Natural killer cell (primary cell): ENCODE measurements at regions of chr11 and their contacts with region 1.

Region 1: GRCh38 chr11:85854557-85855340 is 434 bp upstream of the CCDC83 start:
- DNase-seq: peak; percentile 91 to 92
- ATAC-seq: peak; percentile 92 to 99 (median 93)
- H3K4me3 ChIP-seq: peak overlapping the region; percentile 39
- H3K4me3 Mint-ChIP-seq: peak overlapping the region; percentile 94
- H3K27ac ChIP-seq: peak overlapping the region; percentile 71
- H3K27ac Mint-ChIP-seq: peak overlapping the region; percentile 94 to 96
- H3K4me1 ChIP-seq: peaks cover 11% of the 10 kb centered on the region
- H3K4me1 Mint-ChIP-seq: peaks cover 16% of the 10 kb centered on the region in 2 donors
- H3K27me3 ChIP-seq: no peaks in the 10 kb centered on the region
- H3K27me3 Mint-ChIP-seq: peaks cover 0 to 14% of the 10 kb centered on the region in 2 donors
- CTCF ChIP-seq: peak; percentile 85

Region 2: GRCh38 chr11:85664615-85665481 is 189.9 kb before region 1 on chr11 and contains the start of gene CREBZF:
- intact Hi-C with region 1: loop called (anchors 1 kb)
- DNase-seq: peak; percentile 95 to 96
- ATAC-seq: peak; percentile 72 to 86 (median 79)
- H3K4me3 ChIP-seq: peak within 1 kb of the TSS; percentile 94
- H3K4me3 Mint-ChIP-seq: peak within 1 kb of the TSS; percentile 98
- H3K27ac ChIP-seq: peak within 1 kb of the TSS; percentile 100
- H3K27ac Mint-ChIP-seq: peak within 1 kb of the TSS; percentile 98
- H3K4me1 ChIP-seq: peaks cover 11% of the 10 kb centered on the region
- H3K4me1 Mint-ChIP-seq: peaks cover 50 to 55% of the 10 kb centered on the region in 2 donors
- H3K27me3 ChIP-seq: no peaks in the 10 kb centered on the region
- H3K27me3 Mint-ChIP-seq: no peaks in the 10 kb centered on the region
- CTCF ChIP-seq: no peak
- total RNA-seq, gene CREBZF: 60.1 to 92.7 (median 82.0) TPM

Region 3: GRCh38 chr11:85826116-85826855 is 28.5 kb before region 1 on chr11:
- intact Hi-C with region 1: loop called (anchors 1 kb)
- DNase-seq: peak in 1 of 2 donors; percentile 48
- ATAC-seq: no peak
- H3K4me3 ChIP-seq: no peak overlapping the region
- H3K4me3 Mint-ChIP-seq: no peak overlapping the region
- H3K27ac ChIP-seq: peak overlapping the region; percentile 63
- H3K27ac Mint-ChIP-seq: peak overlapping the region; percentile 82 to 91
- H3K4me1 ChIP-seq: peaks cover 43% of the 10 kb centered on the region
- H3K4me1 Mint-ChIP-seq: peaks cover 34 to 36% of the 10 kb centered on the region in 2 donors
- H3K27me3 ChIP-seq: no peaks in the 10 kb centered on the region
- H3K27me3 Mint-ChIP-seq: no peaks in the 10 kb centered on the region
- CTCF ChIP-seq: no peak

Region 4: GRCh38 chr11:86218125-86219084 is 363.7 kb after region 1 on chr11:
- intact Hi-C with region 1: loop called (anchors 1 kb)
- DNase-seq: peak; percentile 47 to 83
- ATAC-seq: peak; percentile 89 to 96 (median 93)
- H3K4me3 ChIP-seq: no peak overlapping the region
- H3K4me3 Mint-ChIP-seq: peak overlapping the region; percentile 64
- H3K27ac ChIP-seq: peak overlapping the region; percentile 13
- H3K27ac Mint-ChIP-seq: no peak overlapping the region
- H3K4me1 ChIP-seq: peaks cover 11% of the 10 kb centered on the region
- H3K4me1 Mint-ChIP-seq: peaks cover 8% of the 10 kb centered on the region in 2 donors
- H3K27me3 ChIP-seq: no peaks in the 10 kb centered on the region
- H3K27me3 Mint-ChIP-seq: peaks cover 15 to 20% of the 10 kb centered on the region in 2 donors
- CTCF ChIP-seq: peak; percentile 95